HCT116 (cell line): ENCODE measurements at regions of chr1 and their contacts with region 1.

Region 1: DNA sequence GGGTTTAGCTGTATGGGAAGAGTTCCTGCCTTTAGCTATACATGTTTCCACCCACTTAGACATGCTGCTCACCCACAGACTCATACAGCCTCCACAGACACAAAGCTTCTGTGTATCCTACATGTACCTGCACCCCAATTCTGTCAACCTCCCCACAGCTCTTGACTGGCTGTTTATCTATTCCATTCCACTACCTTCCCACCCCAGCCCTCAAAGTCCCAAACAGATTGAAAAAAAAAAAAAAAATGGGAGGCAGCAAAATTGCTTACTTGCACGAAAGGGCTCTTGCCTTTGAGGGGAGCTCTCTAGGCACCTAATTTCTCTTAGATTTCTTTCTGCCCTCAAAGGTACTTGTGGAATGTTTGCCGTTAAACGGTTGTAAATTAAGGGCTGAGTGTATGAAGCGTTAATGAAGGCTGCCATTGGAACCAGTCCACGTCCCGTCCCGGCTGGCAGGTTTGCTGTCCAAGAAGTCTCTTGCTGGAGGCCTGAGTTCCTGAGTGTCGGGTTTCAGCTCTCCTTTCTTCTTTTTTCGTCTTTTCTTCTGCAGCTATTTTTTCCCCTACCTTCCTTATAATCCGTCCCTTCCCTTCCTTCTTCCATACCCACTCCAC is 43.6 kb downstream of the PBX1 start:
- DNase-seq: no peak
- ATAC-seq: peak; percentile 57
- H3K4me3 ChIP-seq: peak overlapping the region; percentile 11 to 39; a peak in 2 of 4 replicates
- H3K27ac ChIP-seq: peak overlapping the region; percentile 64
- H3K4me1 ChIP-seq: peaks cover 23 to 32% of the 10 kb centered on the region in 2 experiments
- H3K27me3 ChIP-seq: no peaks in the 10 kb centered on the region
- CTCF ChIP-seq: no peak
- POLR2A ChIP-seq: no peak
- RAD21 ChIP-seq: 0 out of 2 replicates have a peak, but pooled peaks have one; percentile 19

Region 2: DNA sequence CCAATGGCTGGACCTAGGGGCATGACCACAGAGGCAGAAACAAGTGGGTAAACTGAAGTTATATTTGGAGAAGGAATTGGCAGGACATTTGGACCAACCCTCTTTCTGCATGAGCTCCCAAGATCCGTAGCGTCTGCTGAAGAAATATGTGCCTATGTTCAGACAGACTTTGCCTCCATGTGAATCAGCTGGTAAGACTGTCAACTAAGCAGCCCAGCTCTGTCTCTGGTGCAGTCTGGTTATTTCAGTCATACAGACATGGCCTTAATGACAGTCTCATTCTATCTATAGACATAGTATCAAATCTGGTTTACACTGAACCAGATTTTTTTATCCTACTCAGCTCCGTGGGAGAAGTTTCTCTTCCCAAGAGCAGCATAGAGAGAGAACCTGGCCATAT is 106.7 kb before region 1 on chr1:
- CTCF ChIA-PET with region 1: no interaction called
- POLR2A ChIA-PET with region 1: no interaction called
- RAD21 ChIA-PET with region 1: no interaction called
- intact Hi-C with region 1: no loop called
- DNase-seq: no peak
- ATAC-seq: no peak
- H3K4me3 ChIP-seq: no peak overlapping the region
- H3K27ac ChIP-seq: no peak overlapping the region
- H3K4me1 ChIP-seq: no peaks in the 10 kb centered on the region
- H3K27me3 ChIP-seq: no peaks in the 10 kb centered on the region
- CTCF ChIP-seq: no peak
- POLR2A ChIP-seq: no peak
- RAD21 ChIP-seq: no peak

Region 3: DNA sequence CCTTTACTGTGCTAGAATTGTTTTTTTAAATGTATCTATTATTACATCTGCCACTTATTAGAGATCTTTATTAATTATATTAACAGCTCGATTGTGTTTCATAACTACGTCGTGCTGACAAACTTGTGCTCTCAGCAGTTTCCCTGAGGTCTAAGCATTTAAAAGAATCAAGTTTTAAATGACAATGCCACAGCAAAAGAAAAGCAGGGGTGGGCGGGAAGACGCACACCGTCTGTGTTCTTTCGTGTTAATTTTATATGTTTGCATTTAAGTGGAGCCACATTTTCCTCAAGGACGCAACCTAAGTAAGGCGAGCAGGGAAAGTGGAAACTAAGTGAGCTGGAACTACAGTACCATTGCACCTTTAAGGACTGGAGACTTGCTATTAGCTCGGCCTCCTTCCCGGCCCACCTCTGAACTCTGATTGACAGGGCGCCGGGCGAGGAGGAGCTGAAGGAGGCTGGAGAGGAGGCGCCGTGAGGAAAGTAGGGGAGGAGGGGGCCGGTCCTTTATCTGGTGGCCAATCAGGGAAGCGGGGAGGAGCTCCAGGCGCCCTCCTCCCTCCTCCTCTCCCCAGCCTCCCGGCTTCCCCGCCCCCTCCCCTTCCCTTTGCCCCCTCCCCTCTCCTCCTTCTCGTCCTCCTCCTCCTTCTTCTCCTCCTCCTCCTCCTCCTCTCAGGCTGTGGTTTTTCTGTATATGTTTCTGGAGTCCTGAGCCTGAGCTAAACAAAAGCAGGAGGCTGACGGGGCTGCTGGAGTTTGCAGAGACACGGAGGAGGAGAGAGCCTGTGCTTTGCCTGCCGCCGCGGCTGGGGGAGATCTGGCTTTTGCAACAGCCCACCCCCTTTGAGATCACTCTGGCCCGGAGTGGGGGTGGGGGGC is 43.9 kb before region 1 on chr1 and contains the start of gene PBX1:
- CTCF ChIA-PET with region 1: no interaction called
- POLR2A ChIA-PET with region 1: interaction called, 5 read pairs
- RAD21 ChIA-PET with region 1: no interaction called
- intact Hi-C with region 1: loop called (anchors 2 kb)
- DNase-seq: peak; percentile 89
- ATAC-seq: peak; percentile 100
- H3K4me3 ChIP-seq: peak within 1 kb of the TSS; percentile 54 to 57
- H3K27ac ChIP-seq: no peak within 1 kb of the TSS
- H3K4me1 ChIP-seq: peaks cover 11 to 14% of the 10 kb centered on the region in 2 experiments; a peak in 3 of 4 replicates
- H3K27me3 ChIP-seq: no peaks in the 10 kb centered on the region
- CTCF ChIP-seq: no peak
- POLR2A ChIP-seq: peak; percentile 37
- RAD21 ChIP-seq: no peak
- total RNA-seq, gene PBX1: 29.6 TPM